BJ (cell line): ENCODE measurements at regions of chr9 and their contacts with region 1.

Region 1: DNA sequence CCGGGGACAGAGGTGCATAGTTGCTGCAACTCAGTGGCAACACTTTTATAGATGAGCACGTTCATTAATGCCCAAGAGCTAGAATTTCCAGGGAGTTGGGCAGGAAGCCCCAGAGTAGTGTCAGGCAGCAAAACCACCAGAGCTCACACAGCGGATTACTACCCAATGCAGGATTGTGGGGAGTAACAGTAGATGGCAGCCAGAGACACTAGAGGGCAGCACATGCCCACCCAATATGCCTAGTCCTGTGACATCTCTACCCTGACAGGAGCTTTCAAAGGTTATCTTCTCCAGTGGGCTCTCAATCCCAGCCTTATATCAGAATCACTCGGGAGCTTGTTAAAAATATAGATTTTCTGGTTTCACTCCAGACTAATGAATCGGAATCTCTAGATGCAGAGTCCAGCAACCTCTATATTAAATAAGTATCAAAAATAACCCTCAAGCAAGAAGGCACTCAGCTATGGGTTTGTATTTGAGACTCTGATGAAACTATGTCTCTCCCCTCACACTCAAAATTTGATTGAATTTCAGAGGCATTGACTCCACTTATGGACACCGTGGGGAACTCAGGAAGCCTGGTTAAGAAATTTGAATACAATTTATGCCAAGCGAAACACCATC is 58.4 kb upstream of the PHF24 start:
- DNase-seq: peak; percentile 11
- H3K4me3 ChIP-seq: no peak overlapping the region
- H3K27me3 ChIP-seq: peaks cover 7% of the 10 kb centered on the region
- CTCF ChIP-seq: peak; percentile 85

Region 2: DNA sequence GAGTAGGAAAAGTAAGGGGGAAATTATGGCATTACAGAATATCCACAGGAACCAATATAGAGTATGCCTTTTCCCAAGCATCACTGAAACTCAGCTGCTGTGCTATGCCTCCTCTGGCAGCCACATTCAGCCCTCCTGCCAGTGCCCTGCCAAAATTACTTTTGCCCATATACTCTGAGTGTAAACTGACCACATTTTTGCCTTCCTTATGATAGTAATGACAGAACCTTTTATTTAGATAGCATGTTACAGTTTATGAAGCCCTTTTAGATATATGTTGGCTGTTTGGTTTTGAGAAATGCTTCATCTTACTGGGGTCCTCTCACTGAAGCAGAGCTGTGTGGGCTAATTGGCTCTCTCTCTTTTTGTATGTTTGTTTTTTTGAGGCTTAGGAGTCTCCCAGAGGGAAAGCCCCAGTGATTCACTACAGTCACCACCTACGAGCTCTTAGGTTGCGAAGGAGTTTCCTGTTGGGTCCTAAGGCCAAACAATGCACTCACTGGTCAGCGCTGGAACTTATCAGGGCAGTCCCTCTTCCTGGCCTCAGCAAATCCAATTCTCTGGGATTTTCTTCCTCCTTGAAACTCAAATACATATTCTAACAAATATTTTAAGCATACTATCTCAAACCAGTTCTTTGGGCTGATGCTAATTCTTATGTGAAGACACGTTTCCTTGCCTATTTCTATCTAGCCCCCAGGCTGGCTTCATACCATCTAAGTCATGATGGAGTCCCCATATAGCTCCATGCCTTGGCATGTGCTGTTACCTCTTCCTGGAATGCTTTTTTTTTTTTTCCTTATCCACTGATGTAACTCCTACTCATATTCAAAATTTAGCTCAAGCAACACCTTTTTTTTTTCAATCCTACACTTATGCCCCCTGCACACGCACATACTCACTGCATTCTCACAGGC is 62.2 kb after region 1 on chr9:
- CTCF ChIA-PET with region 1: interaction called, 19 read pairs
- POLR2A ChIA-PET with region 1: no interaction called
- DNase-seq: no peak
- H3K4me3 ChIP-seq: no peak overlapping the region
- H3K27me3 ChIP-seq: peaks cover 32% of the 10 kb centered on the region
- CTCF ChIP-seq: no peak

Region 3: DNA sequence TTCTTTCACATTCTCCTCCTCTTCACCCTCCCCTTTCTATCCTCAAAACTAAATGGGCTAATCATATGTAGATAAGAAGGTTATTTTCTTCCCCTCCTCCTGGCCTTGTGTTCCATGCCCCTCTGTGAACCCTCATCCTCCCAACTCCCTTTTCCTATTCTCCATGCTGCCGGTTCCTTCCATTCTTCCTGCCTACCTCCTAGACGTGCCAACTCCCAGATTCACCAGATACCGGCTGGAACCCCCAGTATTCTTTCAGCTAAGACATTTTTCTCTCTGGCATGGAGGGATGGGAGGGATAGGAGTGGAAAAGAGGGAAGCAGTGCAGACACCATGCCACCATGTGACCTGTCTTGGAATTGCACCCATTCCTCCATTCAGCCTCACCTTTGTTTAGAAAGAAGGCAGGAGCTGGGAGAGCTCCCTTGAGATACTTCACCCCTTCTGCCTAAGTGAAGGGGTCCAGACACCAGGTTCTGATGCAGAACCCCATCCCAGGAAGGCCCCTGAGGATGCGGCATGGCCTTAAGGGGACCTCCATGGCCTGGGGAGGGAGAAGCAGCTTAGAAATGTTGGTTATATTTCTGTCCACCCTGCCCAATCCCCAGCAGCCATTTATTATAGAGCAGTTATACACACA is 94.7 kb after region 1 on chr9:
- CTCF ChIA-PET with region 1: interaction called, 36 read pairs
- POLR2A ChIA-PET with region 1: no interaction called
- DNase-seq: no peak
- H3K4me3 ChIP-seq: no peak overlapping the region
- H3K27me3 ChIP-seq: no peaks in the 10 kb centered on the region
- CTCF ChIP-seq: peak; percentile 66

Region 4: DNA sequence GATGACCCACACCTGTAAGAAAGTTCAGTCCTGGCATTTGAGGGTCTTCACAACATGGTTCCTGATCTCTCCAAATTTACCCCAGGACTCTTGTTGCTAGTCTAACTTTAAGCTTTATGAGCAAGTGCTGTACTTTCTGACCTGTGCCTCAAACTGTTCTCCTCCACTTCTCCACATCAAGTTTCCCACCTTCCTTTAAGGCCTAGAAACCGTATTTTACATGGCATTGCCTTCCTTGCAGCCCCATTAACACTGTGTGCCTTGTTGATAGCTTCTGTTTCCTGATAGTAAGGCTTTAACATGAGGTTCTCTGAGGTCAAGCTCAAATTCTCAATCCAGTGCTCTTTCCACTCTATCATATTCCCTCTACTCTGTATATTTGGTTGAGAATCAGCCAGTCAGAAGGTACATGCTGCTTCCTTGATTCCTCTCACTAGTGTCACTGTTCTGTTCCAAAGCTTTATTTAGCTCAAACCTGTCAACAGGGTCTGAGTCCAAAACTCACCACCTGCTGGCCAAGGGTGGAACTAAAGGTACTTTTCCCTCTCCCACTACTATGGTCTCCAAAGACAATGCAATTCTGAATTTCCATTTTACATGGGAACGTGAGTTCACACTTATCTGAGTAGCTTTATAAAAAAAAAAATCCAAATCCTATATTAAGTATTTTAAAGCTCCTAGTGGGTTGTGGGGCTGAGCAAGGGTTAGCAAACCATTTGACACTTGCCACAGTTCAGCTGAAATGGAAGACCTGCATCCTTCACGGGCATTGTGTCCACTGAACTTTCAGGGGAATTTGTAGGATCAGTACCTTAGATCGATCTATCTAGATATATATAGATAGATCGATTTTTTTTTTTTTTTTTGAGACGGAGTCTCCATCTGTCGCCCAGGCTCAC is 151.7 kb after region 1 on chr9:
- CTCF ChIA-PET with region 1: interaction called, 39 read pairs
- POLR2A ChIA-PET with region 1: no interaction called
- DNase-seq: no peak
- H3K4me3 ChIP-seq: no peak overlapping the region
- H3K27me3 ChIP-seq: no peaks in the 10 kb centered on the region
- CTCF ChIP-seq: peak; percentile 69

Region 5: DNA sequence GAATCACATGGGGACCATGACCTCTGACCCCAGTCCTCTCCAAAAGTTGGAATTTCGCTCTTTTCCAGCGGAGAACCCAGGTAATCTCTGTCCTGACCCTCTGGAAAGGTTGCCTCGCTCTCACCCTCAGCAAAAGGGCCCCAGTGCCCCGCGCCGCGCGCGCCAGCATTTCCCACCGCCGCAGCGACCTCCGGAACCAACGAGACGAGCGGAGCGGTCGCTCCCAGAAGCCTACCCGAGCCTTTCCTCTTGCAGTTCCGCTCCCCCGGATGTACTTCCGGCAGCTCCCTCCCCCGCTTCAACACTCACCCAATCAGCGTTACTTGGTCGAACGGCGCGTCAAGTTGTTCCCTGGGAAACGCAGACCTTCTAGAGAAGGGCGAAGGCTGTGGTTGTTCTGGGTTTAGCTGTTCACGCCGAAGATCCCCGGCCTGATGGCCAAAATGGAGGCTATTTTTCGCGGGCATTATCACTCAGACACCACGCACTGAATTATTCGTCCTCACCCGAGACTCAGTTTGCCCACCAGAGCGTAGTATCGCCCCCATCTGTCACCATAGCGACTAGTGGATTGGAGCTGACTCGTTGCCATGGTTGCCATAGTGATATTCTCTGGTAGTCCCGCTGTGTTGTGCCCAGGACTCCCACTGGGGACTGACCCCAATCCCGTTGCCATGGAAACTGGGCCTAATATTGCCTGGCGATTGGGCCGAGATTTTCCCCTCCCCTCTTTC is 203.4 kb after region 1 on chr9 and contains the start of gene STOML2:
- CTCF ChIA-PET with region 1: interaction called, 57 read pairs
- POLR2A ChIA-PET with region 1: no interaction called
- DNase-seq: peak; percentile 75
- H3K4me3 ChIP-seq: peak within 1 kb of the TSS; percentile 70
- H3K27me3 ChIP-seq: no peaks in the 10 kb centered on the region
- CTCF ChIP-seq: no peak
- polyA plus RNA-seq, gene STOML2: 134 and 170 TPM in 2 replicates